Heart left ventricle (tissue), 16 donors: ENCODE measurements at regions of chr1 and their contacts with region 1.

Region 1: DNA sequence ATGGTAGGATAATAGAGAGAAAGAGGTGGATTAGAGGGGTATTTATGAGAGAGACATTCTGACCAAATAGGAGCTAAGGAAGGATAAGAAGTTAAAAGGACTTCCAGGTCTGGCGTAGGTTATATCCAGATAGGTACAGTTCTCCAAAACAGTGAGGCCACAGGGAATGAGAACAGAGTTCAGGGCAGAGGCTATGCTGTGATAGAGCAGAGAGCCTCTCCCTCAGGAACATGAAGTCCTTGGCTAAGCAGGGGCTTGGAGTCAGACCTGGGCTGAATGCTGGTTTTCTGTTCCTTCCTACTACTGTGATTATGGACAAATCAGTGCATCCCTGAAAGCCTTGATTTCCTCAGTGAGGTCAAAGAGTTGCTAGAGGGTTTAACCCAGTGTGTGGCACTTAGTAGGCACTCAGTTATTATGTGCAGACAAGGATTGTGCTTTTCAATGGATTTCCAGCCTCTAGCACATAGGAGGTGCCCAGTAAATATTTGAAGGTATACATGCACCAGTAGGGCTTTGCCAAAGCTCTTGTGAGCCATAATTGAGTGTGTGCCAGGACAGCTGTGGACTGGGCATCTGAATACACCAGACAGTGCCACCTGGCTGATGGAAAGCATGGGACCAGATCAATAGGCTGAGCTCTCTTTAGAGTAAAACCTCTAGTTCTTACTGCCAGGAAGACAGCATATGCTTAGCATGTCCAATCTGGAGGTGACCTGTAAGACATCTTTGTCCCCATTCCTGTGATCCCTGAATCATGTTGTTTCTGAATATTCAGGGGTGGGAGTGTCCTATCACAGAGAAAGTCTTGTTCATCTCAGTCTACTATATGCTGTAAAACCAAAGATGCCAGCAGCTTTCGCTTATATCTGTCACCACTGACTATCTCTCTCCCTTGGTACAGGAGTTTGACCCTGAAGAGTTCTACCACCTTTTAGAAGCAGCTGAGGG is 111.1 kb downstream of the PIK3R3 start:
- DNase-seq: no peak
- ATAC-seq: peak; percentile 28 to 44 (median 39)
- H3K4me3 ChIP-seq: no peak overlapping the region
- H3K27ac ChIP-seq: peak overlapping the region in 4 of 12 donors; percentile 9 to 53 (median 36)
- H3K4me1 ChIP-seq: peaks cover 0 to 47% (median 15%) of the 10 kb centered on the region in 12 donors
- H3K27me3 ChIP-seq: no peaks in the 10 kb centered on the region
- CTCF ChIP-seq: peak in 2 of 12 donors; percentile 16 to 24
- POLR2A ChIP-seq: no peak

Region 2: GRCh38 chr1:45913183-45913683 is 108.1 kb before region 1 on chr1:
- intact Hi-C with region 1: loop called in 2 of 10 experiments (anchors 2 to 10 kb)
- DNase-seq: peak in 4 of 5 donors; percentile 78 to 89 (median 80)
- ATAC-seq: peak; percentile 93 to 96 (median 95)
- H3K4me3 ChIP-seq: peak overlapping the region in 9 of 12 donors; percentile 31 to 52 (median 40)
- H3K27ac ChIP-seq: peak overlapping the region; percentile 78 to 94 (median 85)
- H3K4me1 ChIP-seq: peaks cover 0 to 28% (median 7%) of the 10 kb centered on the region in 12 donors
- H3K27me3 ChIP-seq: no peaks in the 10 kb centered on the region
- CTCF ChIP-seq: peak in 2 of 12 donors; percentile 12 to 16
- POLR2A ChIP-seq: no peak

Region 3: GRCh38 chr1:45929257-45929687 is 92.0 kb before region 1 on chr1:
- intact Hi-C with region 1: loop called in 3 of 10 experiments (anchors 5 to 10 kb)
- DNase-seq: no peak
- ATAC-seq: peak in 3 of 4 donors; percentile 38 to 42 (median 41)
- H3K4me3 ChIP-seq: no peak overlapping the region
- H3K27ac ChIP-seq: no peak overlapping the region
- H3K4me1 ChIP-seq: peaks cover 0 to 33% (median 13%) of the 10 kb centered on the region in 12 donors
- H3K27me3 ChIP-seq: no peaks in the 10 kb centered on the region
- CTCF ChIP-seq: no peak
- POLR2A ChIP-seq: no peak